ENCODE measurements at regions of chr5 and their contacts with region 1.

Region 1: GRCh38 chr5:149667084-149667828 is 62.9 kb upstream of the PPARGC1B start:
- DNase-seq: peak; percentile 72
- ATAC-seq: peak; percentile 45
- H3K4me3 ChIP-seq: no peak overlapping the region
- H3K4me3 Mint-ChIP-seq: no peak overlapping the region
- H3K27ac ChIP-seq: no peak overlapping the region
- H3K27ac Mint-ChIP-seq: no peak overlapping the region
- H3K4me1 ChIP-seq: peaks cover 0 to 4% of the 10 kb centered on the region in 2 donors
- H3K4me1 Mint-ChIP-seq: peaks cover 3% of the 10 kb centered on the region
- H3K27me3 ChIP-seq: no peaks in the 10 kb centered on the region
- H3K27me3 Mint-ChIP-seq: no peaks in the 10 kb centered on the region
- CTCF ChIP-seq: peak; percentile 87

Region 2: DNA sequence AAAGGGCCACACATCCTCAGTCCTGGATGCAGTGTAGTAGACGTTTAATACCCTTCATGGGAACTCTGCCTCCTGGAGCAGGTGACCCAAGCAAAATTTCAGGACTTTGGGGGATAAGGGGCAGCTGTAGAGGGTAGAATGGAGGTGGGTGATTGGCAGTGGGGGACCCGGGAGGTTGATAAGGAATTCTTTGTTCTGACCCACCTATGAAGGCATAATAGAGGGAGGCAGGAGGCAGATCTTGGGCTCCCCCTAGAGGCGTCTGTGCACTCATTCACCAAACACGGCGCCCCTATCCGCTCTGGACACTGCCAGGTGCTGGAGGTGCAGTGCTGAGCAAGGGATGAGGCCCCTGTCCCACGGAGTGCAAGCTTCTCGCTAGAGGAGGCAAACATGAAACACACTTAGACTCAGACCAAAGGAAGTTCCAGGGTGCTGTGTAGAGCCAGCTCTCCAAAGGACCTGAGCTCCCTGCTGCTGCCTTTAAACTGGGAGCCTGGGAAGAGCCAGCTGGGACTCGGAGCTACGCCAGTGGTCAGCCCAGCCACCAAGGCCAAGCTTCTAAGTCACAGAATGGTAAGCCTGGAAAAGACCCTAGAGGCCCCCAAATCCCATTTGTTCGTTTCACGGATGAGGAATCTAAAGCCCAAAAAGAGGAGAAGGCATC is 295.8 kb before region 1 on chr5:
- CTCF ChIA-PET with region 1: no interaction called
- POLR2A ChIA-PET with region 1: no interaction called
- intact Hi-C with region 1: no loop called
- DNase-seq: peak; percentile 70
- ATAC-seq: peak; percentile 88
- H3K4me3 ChIP-seq: no peak overlapping the region
- H3K4me3 Mint-ChIP-seq: no peak overlapping the region
- H3K27ac ChIP-seq: no peak overlapping the region
- H3K27ac Mint-ChIP-seq: peak overlapping the region; percentile 26
- H3K4me1 ChIP-seq: peaks cover 0 to 6% of the 10 kb centered on the region in 2 donors
- H3K4me1 Mint-ChIP-seq: peaks cover 9% of the 10 kb centered on the region
- H3K27me3 ChIP-seq: no peaks in the 10 kb centered on the region
- H3K27me3 Mint-ChIP-seq: no peaks in the 10 kb centered on the region
- CTCF ChIP-seq: peak; percentile 86

Region 3: DNA sequence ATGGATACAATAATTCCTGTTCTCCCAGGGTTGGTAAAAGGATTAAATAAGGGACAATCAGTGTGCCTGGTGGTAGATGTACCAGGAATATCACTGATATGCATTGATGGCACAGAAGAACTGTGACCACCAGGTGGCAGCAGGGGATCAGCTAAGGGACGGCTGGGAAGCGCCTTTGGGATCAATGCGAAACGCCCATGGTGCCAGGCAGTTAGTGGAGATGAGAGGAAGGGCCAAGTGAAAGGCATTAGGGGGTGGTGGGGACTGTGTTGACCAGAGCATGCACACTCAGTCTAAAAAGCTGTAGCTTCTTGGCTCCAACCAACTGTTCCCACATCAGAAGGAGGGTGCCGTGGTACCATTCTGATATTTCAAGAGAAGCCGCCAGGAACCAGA is 30.4 kb before region 1 on chr5:
- CTCF ChIA-PET with region 1: interaction called, 30 read pairs
- POLR2A ChIA-PET with region 1: interaction called, 4 read pairs
- intact Hi-C with region 1: loop called (anchors 1 kb)
- DNase-seq: peak; percentile 75
- ATAC-seq: peak; percentile 57
- H3K4me3 ChIP-seq: no peak overlapping the region
- H3K4me3 Mint-ChIP-seq: no peak overlapping the region
- H3K27ac ChIP-seq: no peak overlapping the region
- H3K27ac Mint-ChIP-seq: no peak overlapping the region
- H3K4me1 ChIP-seq: no peaks in the 10 kb centered on the region
- H3K4me1 Mint-ChIP-seq: peaks cover 6% of the 10 kb centered on the region
- H3K27me3 ChIP-seq: no peaks in the 10 kb centered on the region
- H3K27me3 Mint-ChIP-seq: no peaks in the 10 kb centered on the region
- CTCF ChIP-seq: peak; percentile 94

Region 4: DNA sequence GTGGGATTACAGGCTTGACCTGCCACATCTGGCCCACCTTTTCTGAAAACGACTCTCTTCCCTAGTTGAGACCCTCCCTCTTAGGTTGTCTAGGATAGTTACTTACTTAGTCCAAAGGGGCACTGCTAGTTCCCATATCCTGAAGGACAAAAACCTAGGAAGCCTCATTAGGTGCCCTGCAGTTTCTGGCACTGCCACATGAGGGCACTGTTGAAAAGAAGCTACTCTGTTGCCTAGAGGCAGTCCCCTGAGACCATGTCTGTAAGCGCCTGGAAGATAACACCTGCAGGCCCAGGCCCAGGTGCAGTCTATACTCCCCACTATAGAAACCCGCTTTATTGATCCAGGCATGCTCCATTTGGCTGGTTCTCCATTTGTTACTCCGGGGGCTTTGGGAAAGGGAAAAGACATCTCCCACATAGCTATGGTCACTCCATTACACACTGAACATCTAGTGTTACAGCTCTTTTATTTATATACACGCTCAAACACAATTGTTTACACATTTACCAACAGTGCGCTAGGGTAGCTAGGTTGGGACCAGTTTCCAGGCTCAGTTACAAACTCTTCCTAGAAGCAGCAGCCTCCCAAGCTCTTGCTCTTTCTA is 10.6 kb before region 1 on chr5:
- CTCF ChIA-PET with region 1: interaction called, 16 read pairs
- POLR2A ChIA-PET with region 1: no interaction called
- intact Hi-C with region 1: no loop called
- DNase-seq: peak; percentile 52
- ATAC-seq: peak; percentile 54
- H3K4me3 ChIP-seq: no peak overlapping the region
- H3K4me3 Mint-ChIP-seq: no peak overlapping the region
- H3K27ac ChIP-seq: no peak overlapping the region
- H3K27ac Mint-ChIP-seq: no peak overlapping the region
- H3K4me1 ChIP-seq: no peaks in the 10 kb centered on the region
- H3K4me1 Mint-ChIP-seq: no peaks in the 10 kb centered on the region
- H3K27me3 ChIP-seq: peaks cover 0 to 3% (median 1%) of the 10 kb centered on the region in 4 experiments
- H3K27me3 Mint-ChIP-seq: peaks cover 32% of the 10 kb centered on the region
- CTCF ChIP-seq: peak; percentile 56

Region 5: GRCh38 chr5:149680810-149681221 is 13.6 kb after region 1 on chr5:
- CTCF ChIA-PET with region 1: interaction called, 29 read pairs
- POLR2A ChIA-PET with region 1: no interaction called
- intact Hi-C with region 1: loop called (anchors 1 kb)
- DNase-seq: peak; percentile 88
- ATAC-seq: peak; percentile 96
- H3K4me3 ChIP-seq: no peak overlapping the region
- H3K4me3 Mint-ChIP-seq: peak overlapping the region; percentile 53
- H3K27ac ChIP-seq: peak overlapping the region; percentile 49 to 56
- H3K27ac Mint-ChIP-seq: peak overlapping the region; percentile 80
- H3K4me1 ChIP-seq: peaks cover 38 to 43% of the 10 kb centered on the region in 2 donors
- H3K4me1 Mint-ChIP-seq: peaks cover 53% of the 10 kb centered on the region
- H3K27me3 ChIP-seq: peaks cover 0 to 4% (median 0%) of the 10 kb centered on the region in 4 experiments
- H3K27me3 Mint-ChIP-seq: no peaks in the 10 kb centered on the region
- CTCF ChIP-seq: no peak

Region 6: DNA sequence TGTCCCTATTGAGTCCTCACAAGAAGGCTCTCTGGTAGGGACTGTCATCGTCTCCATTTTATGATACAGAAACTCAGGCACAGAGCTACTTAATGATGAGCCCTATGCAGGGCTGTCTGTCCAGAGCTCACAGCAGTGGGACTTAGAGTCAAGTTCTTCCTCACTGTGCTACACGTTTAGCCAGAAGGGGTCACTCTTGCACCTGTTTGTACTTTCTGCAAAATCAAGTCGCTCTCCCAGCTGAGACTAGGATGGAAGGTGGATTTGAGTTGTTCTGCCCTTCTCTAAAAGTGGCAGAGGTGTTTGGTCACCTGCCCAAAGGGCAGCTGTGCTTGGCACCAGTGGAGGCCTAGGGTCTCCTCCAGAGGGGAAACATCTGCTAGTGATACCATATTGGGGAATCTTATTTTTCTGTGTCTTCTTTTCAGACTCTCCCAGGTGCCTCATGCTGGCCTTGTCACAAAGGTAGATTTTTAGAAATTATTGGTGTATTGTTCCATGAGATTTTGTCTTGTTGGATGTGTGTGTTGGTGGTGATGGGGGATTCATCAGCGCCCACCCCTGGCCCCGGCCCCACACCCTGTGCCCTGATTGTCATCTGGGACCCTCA is 167.1 kb after region 1 on chr5:
- CTCF ChIA-PET with region 1: interaction called, 204 read pairs
- POLR2A ChIA-PET with region 1: no interaction called
- intact Hi-C with region 1: no loop called
- DNase-seq: peak; percentile 65
- ATAC-seq: no peak
- H3K4me3 ChIP-seq: no peak overlapping the region
- H3K4me3 Mint-ChIP-seq: no peak overlapping the region
- H3K27ac ChIP-seq: no peak overlapping the region
- H3K27ac Mint-ChIP-seq: no peak overlapping the region
- H3K4me1 ChIP-seq: no peaks in the 10 kb centered on the region
- H3K4me1 Mint-ChIP-seq: peaks cover 5% of the 10 kb centered on the region
- H3K27me3 ChIP-seq: no peaks in the 10 kb centered on the region
- H3K27me3 Mint-ChIP-seq: no peaks in the 10 kb centered on the region
- CTCF ChIP-seq: peak; percentile 63

Region 7: DNA sequence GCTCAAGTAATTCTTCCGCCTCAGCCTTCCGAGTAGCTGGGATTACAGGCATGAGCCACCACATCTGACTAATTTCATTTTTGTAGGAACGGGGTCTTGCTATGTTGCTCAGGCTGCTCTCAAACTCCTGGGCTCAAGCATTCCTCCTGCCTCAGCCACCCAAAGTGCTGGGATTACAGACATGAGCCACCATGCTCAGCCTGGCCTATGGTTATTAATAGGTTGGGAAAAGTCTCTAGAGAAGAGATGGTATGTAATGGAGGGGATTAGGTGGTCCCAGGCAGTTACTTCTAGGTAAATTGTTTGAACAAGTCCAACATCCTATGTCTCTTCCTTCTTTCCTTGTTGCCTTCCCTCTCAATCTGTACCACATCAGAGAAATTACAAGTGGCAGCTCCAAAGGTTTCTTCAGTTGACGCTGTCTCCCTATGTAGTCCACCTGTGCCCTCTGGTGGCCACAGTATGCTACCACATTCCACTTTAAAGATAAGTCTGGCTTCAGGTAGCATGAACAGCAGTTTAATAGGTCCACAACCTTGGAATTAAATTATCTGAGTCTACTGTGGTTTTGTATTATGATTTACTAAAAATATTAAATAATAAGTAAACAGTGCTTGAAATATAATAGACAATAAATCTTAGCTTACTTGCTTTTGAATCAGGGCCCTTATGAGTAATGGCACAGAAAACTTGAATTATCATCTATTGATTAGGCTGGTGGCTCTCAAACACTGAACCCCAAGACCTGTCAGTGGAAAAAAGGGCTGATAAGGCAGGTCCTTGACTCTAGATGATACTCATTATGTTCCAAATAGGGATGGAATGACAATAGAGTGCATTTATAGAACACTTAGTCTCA is 323.5 kb after region 1 on chr5:
- CTCF ChIA-PET with region 1: interaction called, 26 read pairs
- POLR2A ChIA-PET with region 1: no interaction called
- intact Hi-C with region 1: no loop called
- DNase-seq: peak; percentile 77
- ATAC-seq: peak; percentile 97
- H3K4me3 ChIP-seq: no peak overlapping the region
- H3K4me3 Mint-ChIP-seq: no peak overlapping the region
- H3K27ac ChIP-seq: no peak overlapping the region
- H3K27ac Mint-ChIP-seq: no peak overlapping the region
- H3K4me1 ChIP-seq: no peaks in the 10 kb centered on the region
- H3K4me1 Mint-ChIP-seq: no peaks in the 10 kb centered on the region
- H3K27me3 ChIP-seq: no peaks in the 10 kb centered on the region
- H3K27me3 Mint-ChIP-seq: no peaks in the 10 kb centered on the region
- CTCF ChIP-seq: peak; percentile 97